ENCODE measurements at regions of chr21 and their contacts with region 1.

Region 1: GRCh38 chr21:25862596-25862995 is 127.8 kb downstream of the GABPA start:
- ATAC-seq: peak in 1 of 8 experiments; percentile 25
- H3K4me3 ChIP-seq: no peak overlapping the region
- H3K27ac ChIP-seq: no peak overlapping the region
- H3K4me1 ChIP-seq: peaks cover 14 to 37% of the 10 kb centered on the region in 2 donors

Region 2: GRCh38 chr21:25801217-25802014 is 61.2 kb before region 1 on chr21:
- in situ Hi-C with region 1: loop called in 1 of 9 experiments (anchors 10 kb)
- ATAC-seq: peak in 6 of 8 experiments; percentile 16 to 98 (median 75)
- H3K4me3 ChIP-seq: no peak overlapping the region
- H3K27ac ChIP-seq: no peak overlapping the region
- H3K4me1 ChIP-seq: no peaks in the 10 kb centered on the region

Region 3: GRCh38 chr21:26099610-26100219 is 237.1 kb after region 1 on chr21:
- in situ Hi-C with region 1: no loop called
- ATAC-seq: peak; percentile 49 to 90 (median 80)
- H3K4me3 ChIP-seq: no peak overlapping the region
- H3K27ac ChIP-seq: peak overlapping the region; percentile 78 to 94
- H3K4me1 ChIP-seq: peaks cover 30 to 31% of the 10 kb centered on the region in 2 donors

Measured in motor neuron (in vitro differentiated cells).